Mammary epithelial cell (primary cell): ENCODE measurements at regions of chr1 and their contacts with region 1.

Region 1: DNA sequence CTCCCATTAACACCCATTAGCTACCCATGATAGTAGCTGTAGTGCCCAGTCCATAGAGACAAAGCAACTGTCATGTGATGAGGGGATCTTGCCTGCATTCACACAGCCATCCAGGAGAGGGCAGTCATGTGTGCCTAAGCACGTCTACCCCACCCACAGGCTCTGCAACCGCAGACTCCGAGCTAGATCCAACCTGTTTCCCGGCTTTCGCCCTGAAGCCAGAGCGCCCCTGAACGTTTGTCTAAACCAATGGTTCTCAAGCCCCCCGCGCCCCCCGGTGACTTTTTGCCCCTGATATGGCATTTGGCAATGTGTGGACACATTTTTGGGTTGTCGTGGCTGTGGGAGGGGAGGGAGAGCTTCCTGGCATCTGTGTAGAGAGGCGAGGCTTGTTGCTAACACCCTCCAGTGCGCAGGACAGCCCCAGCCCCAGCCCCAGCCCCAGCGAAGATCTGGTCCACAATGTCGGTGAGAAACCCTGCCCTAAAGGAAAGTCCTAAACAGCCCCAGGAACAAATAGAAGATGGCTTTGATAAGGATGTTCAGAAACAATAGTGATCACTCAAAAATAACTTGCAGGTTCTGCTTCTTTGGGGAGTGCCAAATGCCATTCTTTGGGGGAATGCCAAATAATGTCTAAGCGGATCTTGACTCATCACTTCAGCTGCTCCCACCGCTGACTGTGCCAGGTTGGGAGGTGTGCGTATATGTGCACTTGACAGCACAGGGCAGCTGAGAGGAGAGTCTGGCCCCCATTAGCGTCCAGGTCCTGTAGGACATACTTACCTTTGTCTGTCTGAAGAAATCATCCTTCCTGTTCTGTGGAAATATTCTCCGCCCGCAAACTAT is 34.5 kb downstream of the SLC44A3 start:
- DNase-seq: peak; percentile 96
- H3K4me3 ChIP-seq: peak overlapping the region; percentile 24 to 49 (median 26)
- H3K27ac ChIP-seq: peak overlapping the region; percentile 56
- H3K4me1 ChIP-seq: peaks cover 21% of the 10 kb centered on the region
- H3K27me3 ChIP-seq: no peaks in the 10 kb centered on the region
- CTCF ChIP-seq: peak; percentile 91 to 96

Region 2: DNA sequence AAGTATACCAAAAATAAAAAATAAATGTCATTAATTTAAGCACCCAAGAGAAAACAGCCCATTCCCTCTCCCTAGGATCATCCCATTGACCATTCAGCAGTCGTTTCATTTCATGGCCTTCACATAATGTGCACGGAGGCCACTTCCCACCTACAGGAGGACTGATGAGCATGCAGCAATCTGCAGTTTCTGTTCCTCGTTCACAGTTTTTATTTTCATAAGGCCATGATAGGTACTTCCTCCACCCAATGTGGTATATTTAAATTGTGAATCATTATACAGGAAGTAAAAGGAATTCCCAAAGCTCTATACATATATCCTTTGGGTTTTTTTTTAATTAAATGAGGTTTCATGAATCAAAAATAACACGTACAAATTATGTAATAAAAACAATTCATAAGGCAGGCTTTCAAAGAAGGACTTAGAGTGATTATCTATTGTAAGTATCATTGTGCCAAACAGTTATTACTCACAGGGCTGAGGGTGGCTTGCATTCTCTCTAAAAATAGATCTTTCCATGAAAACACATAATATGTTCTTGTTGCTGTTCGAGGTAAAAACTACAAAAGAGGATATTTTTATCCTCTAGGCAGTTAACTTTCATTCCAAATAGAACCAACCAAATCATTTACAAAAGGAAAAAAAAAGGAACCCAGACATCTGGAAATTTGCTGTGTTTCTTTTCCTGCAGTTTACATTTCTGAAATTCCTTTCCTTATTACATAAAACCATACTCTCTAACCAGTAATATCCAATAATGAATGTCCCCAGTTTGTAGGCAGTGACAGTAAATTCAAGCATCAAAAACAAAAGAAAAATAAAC is 62.0 kb before region 1 on chr1:
- CTCF ChIA-PET with region 1: no interaction called
- dilution Hi-C with region 1: no loop called
- in situ Hi-C with region 1: no loop called
- intact Hi-C with region 1: no loop called
- DNase-seq: peak; percentile 96
- H3K4me3 ChIP-seq: peak overlapping the region in 1 of 3 experiments; percentile 16
- H3K27ac ChIP-seq: peak overlapping the region; percentile 81
- H3K4me1 ChIP-seq: peaks cover 35% of the 10 kb centered on the region
- H3K27me3 ChIP-seq: no peaks in the 10 kb centered on the region
- CTCF ChIP-seq: peak; percentile 41 to 56

Region 3: GRCh38 chr1:94819941-94820746 is 34.5 kb before region 1 on chr1 and contains the start of gene SLC44A3:
- CTCF ChIA-PET with region 1: no interaction called
- dilution Hi-C with region 1: no loop called
- in situ Hi-C with region 1: no loop called
- intact Hi-C with region 1: loop called (anchors 1 kb)
- DNase-seq: peak; percentile 41
- H3K4me3 ChIP-seq: peak within 1 kb of the TSS; percentile 87 to 95 (median 92)
- H3K27ac ChIP-seq: peak within 1 kb of the TSS; percentile 39
- H3K4me1 ChIP-seq: peaks cover 22% of the 10 kb centered on the region
- H3K27me3 ChIP-seq: no peaks in the 10 kb centered on the region
- CTCF ChIP-seq: peak in 1 of 2 donors; percentile 35
- total RNA-seq, gene SLC44A3: 5.8 to 6.4 TPM

Region 4: DNA sequence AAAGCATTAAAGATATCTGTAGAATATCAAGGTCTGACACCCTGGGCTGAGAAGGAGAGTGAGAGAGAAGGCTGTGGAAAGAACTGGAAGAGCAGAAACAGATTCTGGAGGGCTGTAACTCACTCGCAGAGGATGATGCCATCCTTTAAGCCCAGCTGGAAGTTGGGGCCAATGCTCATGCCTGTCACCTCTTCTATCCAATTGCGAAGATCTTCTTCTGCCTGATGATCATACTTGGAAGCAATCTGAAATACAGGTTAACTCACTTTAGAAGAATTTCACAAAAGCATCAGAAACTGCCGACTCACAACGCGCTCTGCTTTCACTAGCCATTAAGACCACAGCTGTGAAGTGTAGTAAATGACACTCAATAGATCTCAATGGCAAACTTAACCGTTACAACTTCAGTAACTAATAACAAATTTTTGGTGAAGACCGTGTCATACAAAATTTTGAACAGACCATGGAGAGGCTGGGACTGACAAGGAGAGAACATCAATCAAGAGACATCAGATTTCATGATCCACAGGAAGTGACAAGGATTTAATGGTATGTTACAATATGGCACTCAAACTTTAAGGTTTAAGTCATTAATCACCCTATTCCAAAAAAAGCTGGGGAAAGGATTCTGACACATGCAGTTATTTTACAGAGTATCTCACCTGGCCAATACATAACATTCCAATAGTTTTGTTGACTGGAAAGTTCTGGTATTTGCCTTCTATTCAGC is 48.8 kb after region 1 on chr1:
- CTCF ChIA-PET with region 1: no interaction called
- dilution Hi-C with region 1: no loop called
- in situ Hi-C with region 1: no loop called
- intact Hi-C with region 1: loop called (anchors 2 kb)
- DNase-seq: no peak
- H3K4me3 ChIP-seq: no peak overlapping the region
- H3K27ac ChIP-seq: no peak overlapping the region
- H3K4me1 ChIP-seq: peaks cover 23% of the 10 kb centered on the region
- H3K27me3 ChIP-seq: no peaks in the 10 kb centered on the region
- CTCF ChIP-seq: no peak

Region 5: DNA sequence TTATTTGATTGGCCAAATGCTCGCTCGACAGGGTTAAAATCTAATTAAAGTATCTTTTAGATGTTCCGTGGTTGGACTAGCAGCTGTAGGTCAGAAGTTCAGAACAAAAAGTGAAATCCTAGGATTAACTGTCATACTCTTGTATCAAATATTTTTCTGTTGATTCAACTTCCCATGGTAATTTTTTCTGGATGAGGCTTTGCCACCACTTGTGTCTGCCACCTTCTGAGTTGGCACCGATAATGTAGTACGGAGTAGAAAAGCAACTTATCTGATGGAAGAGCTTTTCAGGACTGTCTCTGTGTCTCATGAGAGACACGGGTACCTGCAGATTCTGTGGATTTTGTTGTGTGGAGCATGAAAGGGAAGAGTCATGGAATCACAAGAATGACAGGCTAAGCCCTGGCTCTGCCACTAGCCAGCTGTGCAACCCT is 116.8 kb after region 1 on chr1:
- CTCF ChIA-PET with region 1: no interaction called
- dilution Hi-C with region 1: no loop called
- in situ Hi-C with region 1: no loop called
- intact Hi-C with region 1: loop called (anchors 5 kb)
- DNase-seq: peak; percentile 74
- H3K4me3 ChIP-seq: peak overlapping the region in 1 of 3 experiments; percentile 25
- H3K27ac ChIP-seq: peak overlapping the region; percentile 40
- H3K4me1 ChIP-seq: peaks cover 30% of the 10 kb centered on the region
- H3K27me3 ChIP-seq: no peaks in the 10 kb centered on the region
- CTCF ChIP-seq: no peak

Region 6: GRCh38 chr1:95233737-95234500 is 379.2 kb after region 1 on chr1 and contains the start of gene RWDD3:
- CTCF ChIA-PET with region 1: interaction called, 6 read pairs
- dilution Hi-C with region 1: loop called (anchors 25 kb)
- in situ Hi-C with region 1: loop called (anchors 25 kb)
- intact Hi-C with region 1: loop called (anchors 1 kb)
- DNase-seq: peak; percentile 89
- H3K4me3 ChIP-seq: peak within 1 kb of the TSS; percentile 96 to 99 (median 99)
- H3K27ac ChIP-seq: peak within 1 kb of the TSS; percentile 77
- H3K4me1 ChIP-seq: peaks cover 11% of the 10 kb centered on the region
- H3K27me3 ChIP-seq: no peaks in the 10 kb centered on the region
- CTCF ChIP-seq: peak; percentile 56 to 68
- total RNA-seq, gene RWDD3: 10.3 to 14.0 TPM